Posterior vena cava (tissue), 2 donors: ENCODE measurements at regions of chr5 and their contacts with region 1.

Region 1: DNA sequence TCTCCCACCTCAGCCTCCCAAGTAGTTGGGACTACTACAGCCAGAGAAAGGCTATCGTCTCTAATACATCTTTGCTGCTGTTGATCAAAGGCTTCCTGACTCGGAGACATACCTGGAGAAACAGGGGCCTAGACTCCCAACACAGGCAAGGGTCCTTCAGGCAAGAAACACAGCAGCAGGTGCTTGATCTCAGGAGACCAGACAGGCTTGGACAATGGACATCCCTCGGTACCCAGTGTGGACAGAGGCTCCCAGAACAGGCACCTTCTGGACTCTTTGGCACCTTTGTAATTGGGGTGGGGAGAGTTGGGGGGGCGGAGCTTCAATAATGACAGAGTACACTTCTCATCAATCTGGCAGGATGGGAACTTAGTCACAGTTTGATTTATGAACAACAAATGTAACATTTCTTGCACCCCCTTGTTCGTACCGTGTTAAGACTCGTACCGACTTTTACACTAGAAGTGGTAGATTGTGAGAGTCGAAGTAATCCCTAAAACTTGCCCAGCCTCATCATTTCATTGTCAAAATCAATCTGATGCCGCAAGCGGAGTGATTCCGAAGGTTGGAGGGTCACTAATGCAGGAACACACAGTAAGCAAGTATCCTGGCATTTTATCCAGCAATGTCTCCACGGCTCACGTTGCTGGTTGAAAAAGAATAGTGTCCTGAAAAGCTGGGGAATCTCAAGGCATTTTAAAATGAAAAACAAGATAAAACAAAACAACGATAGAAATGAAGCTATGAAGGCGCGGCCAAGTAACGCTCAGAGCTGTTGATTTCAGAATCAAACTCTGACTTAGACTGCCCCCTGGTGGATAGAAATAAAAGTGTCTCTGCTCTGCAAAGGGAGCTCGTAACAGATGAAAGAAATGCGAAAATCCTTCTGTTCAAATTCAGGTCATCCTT is 46.4 kb upstream of the STK32A start:
- DNase-seq: no peak

Region 2: DNA sequence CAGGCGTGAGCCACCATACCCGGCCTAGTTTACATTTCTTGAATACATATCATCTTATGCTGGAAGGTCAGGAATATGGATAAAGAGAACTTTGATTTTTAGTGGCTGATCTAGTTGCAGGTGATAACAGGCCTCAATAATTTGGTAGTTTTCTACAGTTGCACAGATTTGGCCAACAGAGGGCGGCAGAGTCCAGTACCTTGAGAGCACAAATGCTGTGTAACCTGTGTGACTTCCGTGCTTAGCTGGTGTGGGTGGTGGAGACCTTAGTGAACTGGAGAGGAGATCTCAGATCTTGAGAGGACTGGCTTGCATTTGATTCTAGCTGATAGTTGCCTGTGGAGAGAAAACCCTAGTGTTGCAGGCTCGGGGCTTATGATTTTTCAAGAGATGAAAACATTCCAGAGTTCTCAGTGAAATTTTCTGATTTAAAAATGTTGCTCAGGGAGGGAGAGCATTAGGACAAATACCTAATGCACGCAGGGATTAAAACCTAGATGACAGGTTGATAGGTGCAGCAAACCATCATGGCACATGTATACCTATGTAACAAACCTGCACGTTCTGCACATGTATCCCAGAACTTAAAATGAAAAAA is 655.1 kb before region 1 on chr5:
- intact Hi-C with region 1: loop called in 1 of 2 experiments (anchors 5 kb)
- DNase-seq: peak; percentile 84